Naive thymus-derived CD4-positive, alpha-beta T cell (primary cell): ENCODE measurements at regions of chr2 and their contacts with region 1.

Region 1: DNA sequence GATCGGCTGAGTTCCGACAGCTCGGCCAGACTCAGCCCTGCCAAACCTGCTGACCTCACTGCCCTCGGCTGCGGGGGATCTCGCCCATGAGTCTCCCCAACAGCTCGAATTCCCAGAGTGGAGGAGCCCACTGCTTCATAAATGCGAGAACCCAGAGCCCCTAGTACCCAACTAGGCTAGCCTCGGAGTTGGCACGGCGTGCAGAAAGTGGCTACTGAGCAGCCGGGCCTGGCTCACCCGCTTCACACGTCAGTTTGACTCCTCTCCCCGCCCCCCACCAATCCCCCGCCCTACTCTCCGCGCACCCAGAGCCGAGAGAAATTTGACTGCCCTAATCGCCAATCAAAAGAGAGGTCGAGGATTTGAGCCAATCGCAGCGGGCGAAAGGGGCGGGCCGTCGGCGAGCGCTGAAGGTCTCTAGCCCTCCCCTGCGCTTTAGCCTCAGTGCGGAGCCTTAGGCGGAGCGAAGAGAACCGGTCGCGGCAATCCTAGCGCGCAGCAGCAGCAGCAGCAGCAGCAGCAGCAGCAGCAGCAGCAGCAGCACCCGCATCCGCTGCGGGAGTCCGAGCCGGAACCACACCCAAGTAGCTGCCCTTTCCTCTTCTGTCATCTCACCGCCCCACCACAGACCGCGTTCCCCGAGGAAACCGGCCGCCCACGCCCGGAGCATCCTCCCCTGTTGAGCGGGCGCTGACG is at the start of gene GLS:
- DNase-seq: peak; percentile 89 to 97 (median 95)
- ATAC-seq: peak; percentile 87
- H3K4me3 ChIP-seq: peak within 1 kb of the TSS; percentile 92
- H3K4me3 Mint-ChIP-seq: peak within 1 kb of the TSS; percentile 90 to 100 (median 96)
- H3K27ac ChIP-seq: peak within 1 kb of the TSS; percentile 93
- H3K27ac Mint-ChIP-seq: peak within 1 kb of the TSS; percentile 95 to 98 (median 97)
- H3K4me1 ChIP-seq: peaks cover 17 to 23% of the 10 kb centered on the region in 2 donors
- H3K4me1 Mint-ChIP-seq: peaks cover 25 to 72% (median 62%) of the 10 kb centered on the region in 7 donors
- H3K27me3 ChIP-seq: no peaks in the 10 kb centered on the region
- H3K27me3 Mint-ChIP-seq: no peaks in the 10 kb centered on the region
- total RNA-seq, gene GLS: 167 to 234 (median 202) TPM

Region 2: GRCh38 chr2:189440947-189441708 is 1439.4 kb before region 1 on chr2 and contains the start of gene WDR75:
- CTCF ChIA-PET with region 1: no interaction called
- POLR2A ChIA-PET with region 1: no interaction called
- intact Hi-C with region 1: loop called (anchors 1 kb)
- DNase-seq: peak; percentile 73 to 96 (median 94)
- ATAC-seq: peak; percentile 97
- H3K4me3 ChIP-seq: peak within 1 kb of the TSS; percentile 83
- H3K4me3 Mint-ChIP-seq: peak within 1 kb of the TSS in 6 of 10 donors; percentile 99 to 100 (median 100)
- H3K27ac ChIP-seq: peak within 1 kb of the TSS; percentile 92
- H3K27ac Mint-ChIP-seq: peak within 1 kb of the TSS in 8 of 9 donors; percentile 97 to 100 (median 100)
- H3K4me1 ChIP-seq: peaks cover 10 to 14% of the 10 kb centered on the region in 2 donors
- H3K4me1 Mint-ChIP-seq: peaks cover 3 to 13% (median 8%) of the 10 kb centered on the region in 7 donors
- H3K27me3 ChIP-seq: no peaks in the 10 kb centered on the region
- H3K27me3 Mint-ChIP-seq: peaks cover 0 to 10% (median 0%) of the 10 kb centered on the region in 5 donors
- total RNA-seq, gene WDR75: 39.9 to 67.4 (median 60.7) TPM

Region 3: DNA sequence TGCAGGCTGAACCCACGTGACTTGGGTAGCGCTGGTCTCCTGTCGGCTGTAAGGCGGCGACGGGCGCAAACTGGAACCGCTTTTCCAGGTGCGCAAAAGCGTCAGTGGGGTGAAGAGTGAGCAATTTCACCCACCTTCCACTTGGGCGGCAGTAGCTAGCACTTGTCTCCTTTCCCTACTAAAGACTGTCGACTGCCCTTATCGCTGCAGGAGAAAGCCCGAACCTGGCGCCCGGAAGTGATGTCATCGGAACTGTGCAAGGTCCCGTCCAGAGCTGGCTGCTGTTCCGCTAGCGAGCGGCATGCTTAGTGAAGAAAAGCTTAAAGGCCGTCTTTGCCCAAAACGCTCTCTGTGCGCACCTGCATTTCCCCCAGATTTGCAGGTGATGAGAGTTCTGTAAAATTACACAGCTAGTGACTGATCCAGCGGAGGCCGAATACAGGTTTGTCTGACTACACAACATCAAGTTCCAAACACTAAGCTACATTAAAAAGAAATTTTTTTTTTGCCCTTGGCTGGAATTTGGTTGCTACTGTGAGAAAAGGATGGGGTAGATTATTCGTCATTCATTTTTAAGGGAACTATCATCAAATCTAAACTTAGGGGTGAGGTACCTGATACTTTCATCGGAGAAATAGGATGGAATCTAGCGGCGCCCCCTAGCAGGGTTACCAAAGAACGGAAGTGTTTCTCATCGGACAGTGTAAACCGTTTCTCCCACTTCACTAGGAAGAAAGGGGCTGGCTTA is 1117.8 kb before region 1 on chr2 and contains the start of gene OSGEPL1:
- CTCF ChIA-PET with region 1: interaction called, 4 read pairs
- POLR2A ChIA-PET with region 1: no interaction called
- intact Hi-C with region 1: loop called (anchors 2 kb)
- DNase-seq: peak; percentile 72 to 95 (median 88)
- ATAC-seq: peak; percentile 95
- H3K4me3 ChIP-seq: peak within 1 kb of the TSS; percentile 88
- H3K4me3 Mint-ChIP-seq: peak within 1 kb of the TSS; percentile 88 to 98 (median 94)
- H3K27ac ChIP-seq: peak within 1 kb of the TSS; percentile 89
- H3K27ac Mint-ChIP-seq: peak within 1 kb of the TSS; percentile 94 to 98 (median 96)
- H3K4me1 ChIP-seq: peaks cover 6 to 10% of the 10 kb centered on the region in 2 donors
- H3K4me1 Mint-ChIP-seq: peaks cover 4 to 18% (median 9%) of the 10 kb centered on the region in 7 donors
- H3K27me3 ChIP-seq: no peaks in the 10 kb centered on the region
- H3K27me3 Mint-ChIP-seq: no peaks in the 10 kb centered on the region
- total RNA-seq, gene OSGEPL1: 6.8 to 24.2 (median 7.2) TPM

Region 4: GRCh38 chr2:190511104-190511503 is 369.4 kb before region 1 on chr2:
- CTCF ChIA-PET with region 1: no interaction called
- POLR2A ChIA-PET with region 1: no interaction called
- intact Hi-C with region 1: loop called in 1 of 2 experiments (anchors 5 kb)
- DNase-seq: no peak
- ATAC-seq: no peak
- H3K4me3 ChIP-seq: no peak overlapping the region
- H3K4me3 Mint-ChIP-seq: no peak overlapping the region
- H3K27ac ChIP-seq: no peak overlapping the region
- H3K27ac Mint-ChIP-seq: peak overlapping the region in 4 of 9 donors; percentile 1 to 64 (median 43)
- H3K4me1 ChIP-seq: peaks cover 8 to 10% of the 10 kb centered on the region in 2 donors
- H3K4me1 Mint-ChIP-seq: peaks cover 7 to 36% (median 26%) of the 10 kb centered on the region in 7 donors
- H3K27me3 ChIP-seq: no peaks in the 10 kb centered on the region
- H3K27me3 Mint-ChIP-seq: no peaks in the 10 kb centered on the region

Region 5: GRCh38 chr2:190835303-190835930 is 45.1 kb before region 1 on chr2:
- CTCF ChIA-PET with region 1: no interaction called
- POLR2A ChIA-PET with region 1: no interaction called
- intact Hi-C with region 1: no loop called
- DNase-seq: no peak
- ATAC-seq: no peak
- H3K4me3 ChIP-seq: no peak overlapping the region
- H3K4me3 Mint-ChIP-seq: no peak overlapping the region
- H3K27ac ChIP-seq: no peak overlapping the region
- H3K27ac Mint-ChIP-seq: no peak overlapping the region
- H3K4me1 ChIP-seq: no peaks in the 10 kb centered on the region
- H3K4me1 Mint-ChIP-seq: peaks cover 0 to 2% (median 0%) of the 10 kb centered on the region in 7 donors
- H3K27me3 ChIP-seq: no peaks in the 10 kb centered on the region
- H3K27me3 Mint-ChIP-seq: peaks cover 0 to 6% (median 0%) of the 10 kb centered on the region in 5 donors

Region 6: GRCh38 chr2:190853531-190854383 is 26.8 kb before region 1 on chr2:
- CTCF ChIA-PET with region 1: interaction called, 47 read pairs
- POLR2A ChIA-PET with region 1: interaction called, 19 read pairs
- intact Hi-C with region 1: loop called (anchors 1 to 2 kb)
- DNase-seq: no peak
- ATAC-seq: no peak
- H3K4me3 ChIP-seq: no peak overlapping the region
- H3K4me3 Mint-ChIP-seq: no peak overlapping the region
- H3K27ac ChIP-seq: no peak overlapping the region
- H3K27ac Mint-ChIP-seq: no peak overlapping the region
- H3K4me1 ChIP-seq: no peaks in the 10 kb centered on the region
- H3K4me1 Mint-ChIP-seq: no peaks in the 10 kb centered on the region
- H3K27me3 ChIP-seq: no peaks in the 10 kb centered on the region
- H3K27me3 Mint-ChIP-seq: no peaks in the 10 kb centered on the region

Region 7: DNA sequence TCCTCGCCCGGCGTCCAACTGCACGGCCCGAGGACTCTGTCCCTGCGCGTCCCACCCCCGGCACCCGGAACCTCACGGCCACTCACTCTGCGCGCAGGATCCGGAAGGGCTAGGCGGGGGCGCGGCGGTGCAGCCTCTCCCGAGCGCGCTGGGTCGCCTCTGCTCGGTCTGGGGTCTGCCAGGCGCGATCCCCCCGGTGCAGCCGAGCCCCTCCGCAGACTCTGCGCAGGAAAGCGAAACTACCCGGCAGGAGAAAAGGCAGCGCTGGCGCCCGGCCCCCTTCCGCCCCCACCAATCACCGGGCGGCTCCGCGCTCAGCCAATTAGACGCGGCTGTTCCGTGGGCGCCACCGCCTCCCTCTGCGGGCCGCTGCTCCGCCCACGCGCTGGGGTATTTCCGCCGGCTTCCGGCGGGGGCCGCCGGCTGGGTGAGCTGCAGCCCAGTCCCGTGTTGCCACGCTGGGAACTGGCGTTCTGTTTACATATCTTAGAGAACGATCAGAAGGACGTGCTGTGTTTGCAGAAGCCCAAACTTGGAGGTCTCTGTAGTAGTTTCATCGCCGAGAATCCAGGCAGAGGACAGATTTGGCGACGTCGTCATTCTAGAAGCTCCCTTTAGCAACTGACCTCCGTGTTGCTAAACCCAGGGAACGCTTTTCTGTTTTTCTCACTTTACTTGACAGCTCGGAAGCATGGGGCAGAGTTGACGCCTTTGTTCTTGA is 133.6 kb after region 1 on chr2 and contains the start of gene STAT1:
- CTCF ChIA-PET with region 1: no interaction called
- POLR2A ChIA-PET with region 1: interaction called, 40 read pairs
- intact Hi-C with region 1: loop called (anchors 1 kb)
- DNase-seq: peak; percentile 93 to 99 (median 97)
- ATAC-seq: peak; percentile 97
- H3K4me3 ChIP-seq: peak within 1 kb of the TSS; percentile 69
- H3K4me3 Mint-ChIP-seq: no peak within 1 kb of the TSS
- H3K27ac ChIP-seq: peak within 1 kb of the TSS; percentile 87
- H3K27ac Mint-ChIP-seq: no peak within 1 kb of the TSS
- H3K4me1 ChIP-seq: peaks cover 41 to 48% of the 10 kb centered on the region in 2 donors
- H3K4me1 Mint-ChIP-seq: peaks cover 23 to 51% (median 42%) of the 10 kb centered on the region in 7 donors
- H3K27me3 ChIP-seq: no peaks in the 10 kb centered on the region
- H3K27me3 Mint-ChIP-seq: no peaks in the 10 kb centered on the region
- total RNA-seq, gene STAT1: 74.1 to 1,177 (median 89.6) TPM

Region 8: GRCh38 chr2:191677646-191678436 is 797.3 kb after region 1 on chr2 and contains the start of gene NABP1:
- CTCF ChIA-PET with region 1: no interaction called
- POLR2A ChIA-PET with region 1: interaction called, 15 read pairs
- intact Hi-C with region 1: loop called (anchors 1 kb)
- DNase-seq: peak; percentile 98 to 99 (median 98)
- ATAC-seq: peak; percentile 95
- H3K4me3 ChIP-seq: peak within 1 kb of the TSS; percentile 90
- H3K4me3 Mint-ChIP-seq: peak within 1 kb of the TSS; percentile 87 to 99 (median 96)
- H3K27ac ChIP-seq: peak within 1 kb of the TSS; percentile 92
- H3K27ac Mint-ChIP-seq: peak within 1 kb of the TSS; percentile 97 to 100 (median 99)
- H3K4me1 ChIP-seq: peaks cover 49 to 51% of the 10 kb centered on the region in 2 donors
- H3K4me1 Mint-ChIP-seq: peaks cover 30 to 74% (median 63%) of the 10 kb centered on the region in 7 donors
- H3K27me3 ChIP-seq: no peaks in the 10 kb centered on the region
- H3K27me3 Mint-ChIP-seq: peaks cover 0 to 2% (median 0%) of the 10 kb centered on the region in 5 donors
- total RNA-seq, gene NABP1: 24.5 to 79.5 (median 55.4) TPM